GM10248 (cell line): ENCODE measurements at regions of chr1 and their contacts with region 1.

Region 1: DNA sequence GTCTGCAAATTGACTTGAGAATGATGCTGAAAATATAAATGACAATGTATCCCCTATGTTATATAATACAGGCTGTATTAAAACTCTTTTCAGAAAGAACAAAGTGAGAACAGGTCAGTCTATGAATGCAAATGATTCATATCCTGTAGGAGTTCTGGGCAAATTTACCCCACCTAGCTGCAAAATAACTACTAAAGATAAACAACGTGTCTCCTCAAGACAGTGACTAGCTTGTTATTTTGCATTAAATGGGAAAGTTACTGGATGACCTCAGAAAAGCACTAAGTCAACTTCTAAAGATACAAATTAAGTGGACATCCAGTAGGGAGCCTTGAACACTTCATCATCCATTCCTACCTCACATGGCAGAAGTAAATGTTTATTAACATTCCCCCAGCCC is 11.1 kb downstream of the RNF19B start:
- DNase-seq: no peak
- CTCF ChIP-seq: no peak

Region 2: GRCh38 chr1:33025181-33025571 is 71.7 kb after region 1 on chr1:
- CTCF ChIA-PET with region 1: no interaction called
- POLR2A ChIA-PET with region 1: interaction called, 14 read pairs
- DNase-seq: no peak
- CTCF ChIP-seq: no peak